T-cell (primary cell): ENCODE measurements at regions of chr5 and their contacts with region 1.

Region 1: GRCh38 chr5:102782311-102782770 is 27.2 kb downstream of the PAM start:
- DNase-seq: no peak
- ATAC-seq: no peak
- H3K4me3 ChIP-seq: no peak overlapping the region
- H3K4me3 Mint-ChIP-seq: no peak overlapping the region
- H3K27ac ChIP-seq: no peak overlapping the region
- H3K27ac Mint-ChIP-seq: no peak overlapping the region
- H3K4me1 ChIP-seq: no peaks in the 10 kb centered on the region
- H3K4me1 Mint-ChIP-seq: peaks cover 10 to 22% (median 20%) of the 10 kb centered on the region in 3 donors
- H3K27me3 ChIP-seq: no peaks in the 10 kb centered on the region
- H3K27me3 Mint-ChIP-seq: peaks cover 0 to 3% of the 10 kb centered on the region in 2 donors

Region 2: DNA sequence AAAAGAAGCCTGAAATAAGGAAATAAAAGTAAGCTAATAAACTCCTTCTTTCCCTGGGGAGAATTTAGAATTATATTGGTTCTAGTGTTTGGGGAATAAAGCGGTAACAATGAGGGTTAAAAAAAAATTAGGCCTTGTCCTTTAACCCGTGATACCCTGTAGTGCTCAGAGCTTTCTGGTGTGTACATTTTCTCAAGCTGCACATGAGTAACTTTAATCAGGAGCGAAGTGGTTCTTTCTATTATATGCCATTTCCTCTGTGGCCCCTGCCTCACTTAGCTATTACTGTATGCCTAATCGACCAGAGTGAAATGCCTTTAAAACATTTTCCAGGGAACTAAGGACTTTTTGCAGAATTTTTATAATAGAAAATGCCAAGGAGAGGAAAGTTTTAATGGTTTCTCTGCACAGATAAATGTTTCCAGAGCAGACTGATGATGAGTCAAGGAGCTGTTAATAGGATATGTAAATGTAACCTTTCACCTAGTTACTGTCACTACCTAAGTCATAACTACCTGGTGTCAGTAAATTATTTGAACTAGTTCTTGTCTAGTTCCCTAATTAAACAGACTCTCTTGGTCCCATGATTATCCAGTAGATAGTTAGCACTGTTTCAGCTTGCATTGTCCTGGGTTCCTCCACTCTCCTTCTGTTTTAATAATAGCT is 19.6 kb before region 1 on chr5:
- CTCF ChIA-PET with region 1: interaction called, 5 to 18 read pairs
- POLR2A ChIA-PET with region 1: no interaction called
- DNase-seq: no peak
- ATAC-seq: no peak
- H3K4me3 ChIP-seq: no peak overlapping the region
- H3K4me3 Mint-ChIP-seq: peak overlapping the region; percentile 48 to 71 (median 54)
- H3K27ac ChIP-seq: peak overlapping the region; percentile 59
- H3K27ac Mint-ChIP-seq: peak overlapping the region; percentile 53 to 80
- H3K4me1 ChIP-seq: peaks cover 0 to 18% of the 10 kb centered on the region in 2 experiments
- H3K4me1 Mint-ChIP-seq: peaks cover 41 to 79% (median 74%) of the 10 kb centered on the region in 3 donors
- H3K27me3 ChIP-seq: no peaks in the 10 kb centered on the region
- H3K27me3 Mint-ChIP-seq: no peaks in the 10 kb centered on the region

Region 3: GRCh38 chr5:102941111-102941510 is 158.8 kb after region 1 on chr5:
- CTCF ChIA-PET with region 1: no interaction called
- POLR2A ChIA-PET with region 1: interaction called in 1 of 2 experiments, 13 read pairs
- DNase-seq: no peak
- ATAC-seq: no peak
- H3K4me3 ChIP-seq: no peak overlapping the region
- H3K4me3 Mint-ChIP-seq: no peak overlapping the region
- H3K27ac ChIP-seq: no peak overlapping the region
- H3K27ac Mint-ChIP-seq: no peak overlapping the region
- H3K4me1 ChIP-seq: no peaks in the 10 kb centered on the region
- H3K4me1 Mint-ChIP-seq: peaks cover 0 to 2% (median 0%) of the 10 kb centered on the region in 3 donors
- H3K27me3 ChIP-seq: no peaks in the 10 kb centered on the region
- H3K27me3 Mint-ChIP-seq: no peaks in the 10 kb centered on the region